CD8-positive, alpha-beta T cell (primary cell): ENCODE measurements at regions of chr15 and their contacts with region 1.

Region 1: GRCh38 chr15:56732921-56733797 is at the start of gene ZNF280D:
- DNase-seq: peak; percentile 56 to 88 (median 77)
- ATAC-seq: peak; percentile 84
- H3K4me3 ChIP-seq: peak within 1 kb of the TSS; percentile 73 to 76
- H3K4me3 Mint-ChIP-seq: peak within 1 kb of the TSS; percentile 89
- H3K27ac ChIP-seq: peak within 1 kb of the TSS; percentile 68 to 72
- H3K27ac Mint-ChIP-seq: peak within 1 kb of the TSS; percentile 95
- H3K4me1 ChIP-seq: peaks cover 23% of the 10 kb centered on the region
- H3K4me1 Mint-ChIP-seq: peaks cover 43% of the 10 kb centered on the region
- H3K27me3 ChIP-seq: no peaks in the 10 kb centered on the region
- H3K27me3 Mint-ChIP-seq: no peaks in the 10 kb centered on the region
- CTCF ChIP-seq: no peak
- total RNA-seq, gene ZNF280D: 19.6 to 27.4 TPM

Region 2: DNA sequence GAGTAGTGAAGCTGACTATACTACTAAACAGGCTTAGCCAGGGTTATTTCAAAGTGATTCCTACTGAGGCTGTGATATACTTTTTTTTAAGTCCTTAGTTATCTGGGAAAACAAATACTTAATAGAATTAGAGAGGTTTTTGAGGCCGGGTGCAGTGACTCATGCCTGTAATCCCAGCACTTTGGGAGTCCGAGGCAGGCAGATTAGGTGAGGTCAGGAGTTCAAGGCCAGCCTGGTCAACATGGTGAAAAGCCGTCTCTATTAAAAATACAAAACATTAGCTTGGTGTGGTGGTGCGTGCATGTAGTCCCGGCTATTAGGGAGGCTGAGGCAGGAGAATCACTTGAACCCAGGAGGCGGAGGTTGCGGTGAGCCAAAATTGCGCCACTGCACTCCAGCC is 1024.4 kb before region 1 on chr15:
- CTCF ChIA-PET with region 1: no interaction called
- POLR2A ChIA-PET with region 1: no interaction called
- intact Hi-C with region 1: loop called in 1 of 2 experiments (anchors 5 kb)
- DNase-seq: no peak
- ATAC-seq: no peak
- H3K4me3 ChIP-seq: no peak overlapping the region
- H3K4me3 Mint-ChIP-seq: no peak overlapping the region
- H3K27ac ChIP-seq: no peak overlapping the region
- H3K27ac Mint-ChIP-seq: no peak overlapping the region
- H3K4me1 ChIP-seq: no peaks in the 10 kb centered on the region
- H3K4me1 Mint-ChIP-seq: peaks cover 5% of the 10 kb centered on the region
- H3K27me3 ChIP-seq: no peaks in the 10 kb centered on the region
- H3K27me3 Mint-ChIP-seq: peaks cover 8% of the 10 kb centered on the region
- CTCF ChIP-seq: no peak

Region 3: DNA sequence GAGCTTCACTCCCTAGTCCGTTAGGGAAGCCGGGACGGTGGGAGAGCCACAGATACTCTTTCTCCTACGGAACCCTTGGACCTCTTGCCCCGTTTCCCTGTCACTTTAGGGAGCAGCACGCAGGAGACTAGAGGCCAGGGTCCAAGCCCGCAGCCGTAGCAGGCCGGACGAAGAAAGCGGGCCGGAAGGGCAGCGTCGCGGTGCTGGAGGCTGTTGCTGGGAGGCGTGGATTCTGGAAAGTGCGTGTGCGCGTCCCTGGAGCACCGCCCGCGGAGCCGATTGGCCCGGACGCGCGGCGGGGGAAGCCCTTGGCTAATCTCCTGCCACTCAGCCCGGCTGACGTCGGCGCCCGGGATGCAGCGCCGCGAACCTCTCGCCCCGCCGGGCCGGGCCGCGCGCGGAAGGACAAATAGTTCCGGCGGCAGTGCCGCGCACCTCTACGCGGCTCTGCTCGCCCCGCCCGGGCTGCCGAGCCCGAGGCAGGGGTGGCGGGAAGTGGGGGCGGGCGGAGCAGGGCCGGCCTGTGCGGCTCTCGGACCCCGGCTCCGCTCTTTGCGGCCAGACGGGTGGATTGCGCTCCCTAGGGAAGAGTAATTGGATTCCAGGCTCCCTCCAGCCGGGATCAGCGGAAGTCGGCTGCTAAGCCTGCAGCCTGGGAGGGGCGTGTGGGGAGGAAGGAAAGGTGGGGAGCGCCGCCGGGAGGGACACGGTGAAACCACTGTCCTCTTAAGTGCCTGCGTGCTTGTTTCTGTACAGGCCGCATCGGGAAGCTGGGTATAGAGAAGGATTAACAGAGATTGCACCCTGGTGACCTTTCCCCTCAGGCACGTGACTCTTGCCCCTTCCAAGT is 154.0 kb after region 1 on chr15:
- CTCF ChIA-PET with region 1: no interaction called
- POLR2A ChIA-PET with region 1: no interaction called
- intact Hi-C with region 1: loop called (anchors 1 to 5 kb)
- DNase-seq: peak; percentile 52 to 94 (median 77)
- ATAC-seq: peak; percentile 85
- H3K4me3 ChIP-seq: peak overlapping the region; percentile 77
- H3K4me3 Mint-ChIP-seq: peak overlapping the region; percentile 86
- H3K27ac ChIP-seq: peak overlapping the region; percentile 68 to 92
- H3K27ac Mint-ChIP-seq: peak overlapping the region; percentile 86
- H3K4me1 ChIP-seq: peaks cover 14% of the 10 kb centered on the region
- H3K4me1 Mint-ChIP-seq: peaks cover 31% of the 10 kb centered on the region
- H3K27me3 ChIP-seq: no peaks in the 10 kb centered on the region
- H3K27me3 Mint-ChIP-seq: no peaks in the 10 kb centered on the region
- CTCF ChIP-seq: no peak